Common myeloid progenitor, CD34-positive (primary cell): ENCODE measurements at regions of chr11 and their contacts with region 1.

Region 1: GRCh38 chr11:83156150-83156995 is 558 bp upstream of the PCF11 start:
- DNase-seq: peak; percentile 100
- H3K4me3 ChIP-seq: peak overlapping the region; percentile 32 to 99 (median 94)
- H3K27ac ChIP-seq: peak overlapping the region; percentile 73 to 93
- H3K4me1 ChIP-seq: peaks cover 16 to 34% (median 27%) of the 10 kb centered on the region in 4 experiments
- H3K27me3 ChIP-seq: no peaks in the 10 kb centered on the region

Region 2: GRCh38 chr11:83071567-83072349 is 84.6 kb before region 1 on chr11 and contains the start of gene RAB30:
- CTCF ChIA-PET with region 1: interaction called, 5 read pairs
- POLR2A ChIA-PET with region 1: interaction called, 13 read pairs
- DNase-seq: peak; percentile 99
- H3K4me3 ChIP-seq: peak within 1 kb of the TSS; percentile 60 to 97 (median 91)
- H3K27ac ChIP-seq: peak within 1 kb of the TSS; percentile 97 to 98
- H3K4me1 ChIP-seq: peaks cover 10 to 31% (median 16%) of the 10 kb centered on the region in 4 experiments
- H3K27me3 ChIP-seq: peaks cover 5 to 31% (median 28%) of the 10 kb centered on the region in 5 experiments

Region 3: GRCh38 chr11:83124636-83125424 is 31.5 kb before region 1 on chr11:
- CTCF ChIA-PET with region 1: no interaction called
- POLR2A ChIA-PET with region 1: no interaction called
- DNase-seq: no peak
- H3K4me3 ChIP-seq: no peak overlapping the region
- H3K27ac ChIP-seq: no peak overlapping the region
- H3K4me1 ChIP-seq: no peaks in the 10 kb centered on the region
- H3K27me3 ChIP-seq: no peaks in the 10 kb centered on the region